ENCODE measurements at regions of chr5 and their contacts with region 1.

Region 1: GRCh38 chr5:43120720-43121564 is at the start of gene ZNF131:
- DNase-seq: peak; percentile 95 to 97
- ATAC-seq: peak; percentile 98 to 100 (median 99)
- H3K4me3 ChIP-seq: peak within 1 kb of the TSS; percentile 73 to 97 (median 88)
- H3K27ac ChIP-seq: peak within 1 kb of the TSS; percentile 86 to 100 (median 97)
- H3K4me1 ChIP-seq: peaks cover 3 to 56% (median 29%) of the 10 kb centered on the region in 9 donors
- H3K27me3 ChIP-seq: no peaks in the 10 kb centered on the region
- CTCF ChIP-seq: no peak
- total RNA-seq, gene ZNF131: 13.4 to 20.6 (median 16.8) TPM

Region 2: DNA sequence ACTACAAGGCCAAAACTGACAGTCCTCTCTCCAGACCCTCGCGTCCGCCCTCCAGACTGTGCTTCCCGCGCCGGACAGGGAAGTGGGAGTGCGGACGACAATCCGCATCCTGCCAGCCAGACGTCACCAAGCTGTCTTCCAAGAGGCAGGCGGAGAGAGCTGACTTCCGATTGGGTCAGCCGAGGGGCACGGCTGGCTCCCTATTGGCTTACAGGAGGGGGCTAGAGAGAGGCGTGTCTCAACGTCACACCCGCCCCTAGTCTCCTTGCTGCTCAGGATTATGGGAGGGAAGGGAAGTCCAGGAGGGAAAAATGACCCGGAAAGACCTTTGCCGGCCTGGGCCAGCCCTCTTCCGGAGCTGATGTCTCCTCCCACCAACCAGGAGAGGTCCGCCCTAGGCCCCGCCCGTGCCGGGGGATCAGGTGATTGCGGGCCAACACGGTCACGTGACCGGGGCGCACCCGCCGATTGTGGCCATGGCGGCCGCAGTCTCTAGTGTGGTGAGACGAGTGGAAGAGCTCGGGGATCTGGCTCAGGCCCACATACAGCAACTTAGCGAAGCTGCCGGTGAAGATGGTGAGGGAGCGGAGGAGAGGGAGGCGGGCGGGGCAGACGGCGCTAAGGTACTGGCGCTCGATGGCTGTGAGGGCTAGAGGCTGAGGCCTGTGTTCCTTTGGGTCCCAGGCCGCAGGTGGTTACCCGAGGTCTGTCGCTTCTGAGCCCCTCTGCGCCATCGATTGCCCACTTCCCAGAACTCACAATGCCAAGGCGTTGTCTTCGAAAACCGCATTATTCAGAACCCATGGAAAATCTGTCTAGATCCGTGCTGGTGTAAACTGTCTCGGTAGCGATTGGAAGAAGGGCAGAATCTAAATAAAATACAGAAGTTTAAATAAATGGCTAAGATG is 1216.8 kb before region 1 on chr5 and contains the start of gene RIMOC1:
- intact Hi-C with region 1: loop called in 1 of 10 experiments (anchors 10 kb)
- DNase-seq: peak; percentile 98 to 99
- ATAC-seq: peak; percentile 98 to 100 (median 99)
- H3K4me3 ChIP-seq: peak within 1 kb of the TSS; percentile 34 to 93 (median 70)
- H3K27ac ChIP-seq: peak within 1 kb of the TSS; percentile 51 to 92 (median 87)
- H3K4me1 ChIP-seq: peaks cover 0 to 49% (median 37%) of the 10 kb centered on the region in 9 donors
- H3K27me3 ChIP-seq: peaks cover 0 to 4% (median 0%) of the 10 kb centered on the region in 7 donors
- CTCF ChIP-seq: no peak
- total RNA-seq, gene RIMOC1: 10.2 to 27.6 (median 17.1) TPM

Region 3: DNA sequence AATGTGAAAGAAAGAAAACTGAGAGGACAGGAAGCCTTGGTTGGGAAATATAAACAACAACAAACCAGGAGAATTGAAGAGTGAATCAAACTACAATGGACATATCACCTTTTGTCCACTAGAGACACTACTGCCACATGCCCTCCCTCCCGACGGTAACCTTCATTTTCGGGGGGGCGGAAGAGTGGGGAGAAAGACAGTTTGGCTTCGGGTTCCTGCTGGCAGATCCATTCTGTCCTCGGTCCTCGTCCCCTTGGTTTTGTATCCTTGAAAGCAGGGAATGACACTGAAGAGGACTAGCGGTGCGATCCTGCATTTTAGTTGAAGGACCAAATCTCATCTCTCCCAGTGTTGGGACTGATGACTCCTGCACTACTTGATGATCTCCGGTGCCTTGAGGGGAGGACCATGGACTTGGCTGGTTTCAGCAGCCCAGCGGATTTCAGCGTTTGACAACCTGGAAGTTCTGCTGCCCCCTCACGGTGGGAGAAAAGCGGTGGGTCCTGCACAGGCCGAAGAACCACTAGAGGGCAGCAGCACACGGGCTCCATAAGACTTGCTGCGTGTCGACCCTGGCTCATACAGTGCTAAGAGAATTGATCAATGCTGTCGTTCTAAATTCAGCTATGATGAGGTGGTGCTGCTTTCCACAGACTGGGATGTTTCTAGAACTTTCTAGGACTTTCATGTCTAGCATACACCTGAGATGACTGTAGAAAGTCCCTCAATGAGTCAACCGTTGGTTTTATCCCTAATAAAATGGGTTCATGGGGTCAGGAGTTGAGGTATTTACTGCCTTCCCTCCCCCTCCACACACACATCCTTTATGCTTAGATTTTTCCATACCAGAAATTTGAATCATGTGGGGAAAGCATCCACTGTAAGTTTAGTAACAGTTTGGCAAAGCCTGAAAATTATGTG is 15.3 kb before region 1 on chr5:
- intact Hi-C with region 1: loop called in 1 of 10 experiments (anchors 2 kb)
- DNase-seq: peak; percentile 87 to 90
- ATAC-seq: peak; percentile 90 to 97 (median 95)
- H3K4me3 ChIP-seq: peak overlapping the region in 9 of 10 donors; percentile 26 to 58 (median 48)
- H3K27ac ChIP-seq: peak overlapping the region in 9 of 10 donors; percentile 42 to 76 (median 53)
- H3K4me1 ChIP-seq: peaks cover 0 to 10% (median 5%) of the 10 kb centered on the region in 9 donors
- H3K27me3 ChIP-seq: no peaks in the 10 kb centered on the region
- CTCF ChIP-seq: peak; percentile 97 to 100 (median 100)

Region 4: GRCh38 chr5:43191740-43192557 is 71.0 kb after region 1 on chr5 and contains the start of gene NIM1K:
- intact Hi-C with region 1: loop called in 1 of 10 experiments (anchors 5 kb)
- DNase-seq: peak; percentile 62 to 68
- ATAC-seq: peak; percentile 82 to 94 (median 92)
- H3K4me3 ChIP-seq: peak within 1 kb of the TSS; percentile 42 to 75 (median 63)
- H3K27ac ChIP-seq: peak within 1 kb of the TSS in 2 of 10 donors; percentile 15 to 19
- H3K4me1 ChIP-seq: peaks cover 2 to 33% (median 25%) of the 10 kb centered on the region in 9 donors
- H3K27me3 ChIP-seq: peaks cover 0 to 31% (median 0%) of the 10 kb centered on the region in 7 donors
- CTCF ChIP-seq: no peak
- total RNA-seq, gene NIM1K: 0.12 to 0.42 (median 0.22) TPM in 8 of 10 donors, not detected in the others

Region 5: GRCh38 chr5:43305948-43306565 is 185.1 kb after region 1 on chr5:
- intact Hi-C with region 1: loop called in 6 of 10 experiments (anchors 2 to 10 kb)
- DNase-seq: no peak
- ATAC-seq: peak in 5 of 8 donors; percentile 56 to 73 (median 61)
- H3K4me3 ChIP-seq: no peak overlapping the region
- H3K27ac ChIP-seq: no peak overlapping the region
- H3K4me1 ChIP-seq: peaks cover 0 to 73% (median 22%) of the 10 kb centered on the region in 9 donors
- H3K27me3 ChIP-seq: no peaks in the 10 kb centered on the region
- CTCF ChIP-seq: peak; percentile 23 to 79 (median 70)

Region 6: DNA sequence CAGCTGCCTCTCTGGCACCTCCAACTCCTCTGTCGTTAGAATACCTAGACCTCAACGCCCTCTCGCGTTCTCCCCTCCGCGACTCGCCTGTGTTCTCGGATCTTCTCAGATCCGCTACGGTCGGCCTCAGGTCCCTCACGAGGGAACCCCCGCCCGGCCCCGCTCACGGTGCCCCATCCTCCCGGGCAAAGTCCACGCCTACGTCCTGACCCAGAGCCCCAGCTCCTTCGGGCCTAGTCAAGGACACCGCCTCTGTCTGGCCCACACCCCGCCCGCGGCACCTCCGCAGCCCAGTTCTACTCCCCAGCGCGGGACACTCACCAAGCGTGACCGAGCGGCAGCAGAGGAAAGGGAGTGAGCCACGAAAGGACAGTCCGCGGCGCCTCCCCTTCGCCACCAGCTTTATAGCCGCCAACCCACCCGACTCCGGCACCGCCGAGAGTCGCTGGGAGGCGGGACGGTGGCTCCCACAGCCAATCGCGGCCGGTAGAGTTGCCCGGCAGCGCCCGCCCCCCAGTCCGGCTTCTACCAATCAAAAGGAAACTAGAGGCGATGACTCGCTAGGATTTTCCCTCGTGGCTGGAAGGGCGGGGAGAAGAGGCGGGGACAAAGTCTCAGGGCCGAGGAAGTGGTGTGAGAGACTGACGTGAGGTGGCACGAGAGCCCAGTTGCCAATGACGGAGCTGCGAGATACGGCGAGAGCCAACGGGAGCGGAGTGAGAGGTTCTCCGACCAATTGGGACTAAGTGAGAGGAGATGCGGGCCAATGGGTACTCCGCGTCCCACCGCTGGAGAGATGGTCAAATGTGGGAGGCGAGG is 192.3 kb after region 1 on chr5 and contains the start of gene HMGCS1:
- intact Hi-C with region 1: loop called in 5 of 10 experiments (anchors 5 to 10 kb)
- DNase-seq: peak; percentile 97 to 99
- ATAC-seq: peak; percentile 97 to 100 (median 99)
- H3K4me3 ChIP-seq: peak within 1 kb of the TSS; percentile 69 to 99 (median 92)
- H3K27ac ChIP-seq: peak within 1 kb of the TSS; percentile 75 to 97 (median 90)
- H3K4me1 ChIP-seq: peaks cover 0 to 47% (median 27%) of the 10 kb centered on the region in 9 donors
- H3K27me3 ChIP-seq: no peaks in the 10 kb centered on the region
- CTCF ChIP-seq: no peak
- total RNA-seq, gene HMGCS1: 24.8 to 33.0 (median 27.1) TPM

Measured in heart right ventricle (tissue), 16 donors.